Ovary (tissue), 10 donors: ENCODE measurements at regions of chr11 and their contacts with region 1.

Region 1: GRCh38 chr11:59224351-59224928 is 11.7 kb upstream of the MPEG1 start:
- DNase-seq: no peak
- H3K4me3 ChIP-seq: no peak overlapping the region
- H3K27ac ChIP-seq: no peak overlapping the region
- H3K4me1 ChIP-seq: peaks cover 6% of the 10 kb centered on the region
- H3K27me3 ChIP-seq: no peaks in the 10 kb centered on the region
- CTCF ChIP-seq: no peak
- EP300 ChIP-seq: no peak
- POLR2A ChIP-seq: no peak

Region 2: DNA sequence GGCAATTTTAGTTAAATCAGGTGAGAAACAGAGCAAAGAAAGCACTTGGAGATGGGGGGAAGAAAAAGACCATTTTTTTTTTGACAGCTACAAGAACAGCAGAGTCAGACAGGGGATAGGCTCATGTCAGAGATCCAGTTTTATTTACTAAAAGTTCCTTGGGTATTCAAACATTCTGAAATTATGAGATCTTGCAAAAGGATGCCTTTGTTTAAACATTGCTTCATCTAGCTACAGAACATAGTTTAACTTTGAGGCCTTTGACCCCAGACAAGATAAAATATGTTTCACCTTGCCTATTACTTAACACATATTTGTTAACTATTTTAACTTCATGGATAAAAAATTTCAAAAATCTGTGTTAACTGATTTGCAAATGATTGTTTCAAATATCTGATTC is 278.8 kb before region 1 on chr11:
- intact Hi-C with region 1: no loop called
- DNase-seq: no peak
- H3K4me3 ChIP-seq: no peak overlapping the region
- H3K27ac ChIP-seq: no peak overlapping the region
- H3K4me1 ChIP-seq: no peaks in the 10 kb centered on the region
- H3K27me3 ChIP-seq: no peaks in the 10 kb centered on the region
- CTCF ChIP-seq: no peak
- EP300 ChIP-seq: no peak
- POLR2A ChIP-seq: no peak

Region 3: DNA sequence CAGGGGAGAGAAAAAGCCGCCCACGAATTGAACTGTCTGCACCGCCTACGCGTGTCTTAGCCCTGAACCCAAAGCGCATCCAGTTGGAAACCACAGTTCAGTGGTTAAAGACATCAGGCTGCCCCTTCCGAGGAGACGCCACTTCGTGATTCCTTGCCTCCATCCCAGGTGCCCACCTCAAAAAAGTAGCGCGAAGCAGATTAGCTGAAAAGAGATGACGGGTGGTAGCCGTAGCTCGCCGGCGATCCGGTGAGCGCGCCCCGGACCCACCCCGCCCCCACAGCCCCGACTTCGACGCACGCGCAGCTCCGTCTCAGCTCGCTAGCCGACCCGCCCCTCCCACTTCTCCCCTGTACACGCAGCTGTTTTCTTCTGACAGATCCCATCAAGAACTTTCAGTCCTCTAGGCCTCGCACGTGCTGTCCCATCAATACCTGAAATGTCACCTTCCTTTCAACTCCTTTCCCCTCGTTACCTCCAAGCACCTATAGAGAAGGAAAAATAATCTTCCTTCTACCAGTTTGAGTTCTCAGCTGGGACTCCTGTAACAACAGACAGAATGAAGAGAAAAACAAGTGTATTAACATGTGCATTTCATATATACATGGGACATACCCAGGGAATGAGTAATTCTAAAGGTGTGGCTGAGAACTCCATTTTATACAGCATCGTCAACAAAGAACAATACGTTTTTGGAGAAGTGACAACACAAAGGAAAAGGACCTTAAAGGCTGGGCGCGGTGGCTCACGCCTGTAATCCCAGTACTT is 336.4 kb after region 1 on chr11:
- intact Hi-C with region 1: no loop called
- DNase-seq: peak; percentile 85 to 90 (median 89)
- H3K4me3 ChIP-seq: peak overlapping the region; percentile 65
- H3K27ac ChIP-seq: peak overlapping the region; percentile 78 to 85
- H3K4me1 ChIP-seq: peaks cover 4% of the 10 kb centered on the region
- H3K27me3 ChIP-seq: no peaks in the 10 kb centered on the region
- CTCF ChIP-seq: no peak
- EP300 ChIP-seq: no peak
- POLR2A ChIP-seq: peak; percentile 33

Region 4: DNA sequence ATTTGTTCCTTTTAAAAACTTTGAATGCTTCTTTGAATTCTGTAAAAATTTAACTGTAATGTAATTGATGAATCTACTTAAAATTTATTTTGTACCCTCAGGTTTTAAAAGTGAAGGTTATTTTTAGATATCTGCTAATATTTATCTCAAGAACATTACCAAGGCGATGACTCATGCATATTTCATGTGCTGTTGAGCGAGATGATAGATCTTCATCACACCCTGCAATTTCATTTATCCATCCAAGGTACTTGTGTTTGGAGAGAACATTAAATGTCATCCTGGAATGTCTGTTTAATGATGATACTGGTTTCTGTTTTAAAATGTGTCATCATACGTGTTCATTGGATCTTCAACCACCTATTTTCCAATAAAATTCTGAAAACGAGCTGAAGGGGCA is 732.7 kb after region 1 on chr11:
- intact Hi-C with region 1: loop called in 1 of 4 experiments (anchors 10 kb)
- DNase-seq: no peak
- H3K4me3 ChIP-seq: no peak overlapping the region
- H3K27ac ChIP-seq: no peak overlapping the region
- H3K4me1 ChIP-seq: no peaks in the 10 kb centered on the region
- H3K27me3 ChIP-seq: no peaks in the 10 kb centered on the region
- CTCF ChIP-seq: no peak
- EP300 ChIP-seq: no peak
- POLR2A ChIP-seq: no peak